ENCODE measurements at regions of chr6 and their contacts with region 1.

Region 1: GRCh38 chr6:39865011-39865888 is 69.0 kb downstream of the MOCS1 start:
- DNase-seq: peak in 7 of 9 donors; percentile 2 to 65 (median 29)
- ATAC-seq: peak; percentile 52
- H3K4me3 ChIP-seq: no peak overlapping the region
- H3K4me3 Mint-ChIP-seq: no peak overlapping the region
- H3K27ac ChIP-seq: no peak overlapping the region
- H3K27ac Mint-ChIP-seq: no peak overlapping the region
- H3K4me1 ChIP-seq: no peaks in the 10 kb centered on the region
- H3K4me1 Mint-ChIP-seq: no peaks in the 10 kb centered on the region
- H3K27me3 ChIP-seq: no peaks in the 10 kb centered on the region
- H3K27me3 Mint-ChIP-seq: peaks cover 0 to 38% (median 12%) of the 10 kb centered on the region in 5 donors

Region 2: DNA sequence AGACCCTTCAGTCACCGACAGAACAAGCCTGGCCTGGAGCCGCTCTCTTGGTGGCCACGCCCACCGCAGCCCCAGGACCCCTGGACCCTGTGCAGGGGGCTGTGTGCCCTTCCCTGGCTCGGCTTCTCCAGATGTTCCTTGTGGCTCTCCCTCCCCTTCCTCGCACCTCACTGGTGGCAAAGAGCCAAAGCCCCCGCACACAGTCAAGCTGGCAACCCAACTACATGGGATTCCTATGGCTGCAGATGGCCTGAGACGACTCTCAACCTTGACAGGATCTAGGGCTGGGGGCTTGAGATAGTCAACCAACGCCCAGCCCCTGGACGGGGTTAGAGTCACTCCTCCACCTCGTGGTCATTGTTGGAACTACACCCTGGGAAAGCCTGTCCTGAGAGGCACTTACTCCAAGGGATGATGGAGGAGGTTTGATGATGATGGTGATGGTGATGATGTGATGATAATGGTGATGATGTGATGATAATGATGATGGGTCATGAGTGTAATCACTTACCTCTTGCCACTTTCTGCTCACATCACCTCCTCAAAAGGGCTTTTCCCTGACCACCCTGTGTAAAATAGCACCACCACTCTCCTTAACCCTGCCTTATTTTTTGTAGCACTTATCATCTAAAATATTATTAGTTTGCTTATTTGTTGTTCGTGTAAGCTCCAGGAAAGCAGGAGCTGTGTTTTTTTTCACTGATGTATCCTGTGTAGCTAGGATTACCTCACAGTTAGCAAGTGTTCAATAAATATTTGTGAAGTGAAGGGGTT is 443.5 kb after region 1 on chr6:
- CTCF ChIA-PET with region 1: no interaction called
- POLR2A ChIA-PET with region 1: no interaction called
- intact Hi-C with region 1: loop called (anchors 5 kb)
- DNase-seq: peak in 6 of 9 donors; percentile 14 to 70 (median 40)
- ATAC-seq: peak; percentile 58
- H3K4me3 ChIP-seq: no peak overlapping the region
- H3K4me3 Mint-ChIP-seq: no peak overlapping the region
- H3K27ac ChIP-seq: no peak overlapping the region
- H3K27ac Mint-ChIP-seq: peak overlapping the region in 1 of 9 donors; percentile 58
- H3K4me1 ChIP-seq: no peaks in the 10 kb centered on the region
- H3K4me1 Mint-ChIP-seq: peaks cover 0 to 12% (median 0%) of the 10 kb centered on the region in 7 donors
- H3K27me3 ChIP-seq: no peaks in the 10 kb centered on the region
- H3K27me3 Mint-ChIP-seq: peaks cover 34 to 48% (median 44%) of the 10 kb centered on the region in 5 donors

Region 3: DNA sequence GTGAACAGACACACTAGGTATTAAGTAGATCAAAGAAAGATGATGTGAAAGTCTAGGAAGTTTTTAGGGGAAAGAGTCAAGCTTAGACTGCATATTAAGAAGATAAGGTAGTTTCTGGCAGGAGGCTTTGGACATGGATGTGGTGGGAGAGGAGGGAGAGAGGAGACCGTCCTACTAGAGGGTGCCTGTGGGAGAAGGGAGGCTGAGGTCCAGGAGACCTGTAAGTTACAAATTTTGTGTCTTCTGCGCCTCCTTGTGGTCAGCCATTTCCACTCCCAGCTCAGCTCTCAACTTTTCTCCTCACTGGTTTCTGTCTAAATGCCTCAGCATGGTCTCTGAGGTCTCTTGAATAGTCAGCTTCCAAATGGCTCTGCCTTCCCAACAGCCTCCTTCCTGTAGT is 980.3 kb after region 1 on chr6:
- CTCF ChIA-PET with region 1: no interaction called
- POLR2A ChIA-PET with region 1: no interaction called
- intact Hi-C with region 1: loop called in 1 of 2 experiments (anchors 10 kb)
- DNase-seq: peak in 4 of 9 donors; percentile 6 to 23 (median 16)
- ATAC-seq: no peak
- H3K4me3 ChIP-seq: no peak overlapping the region
- H3K4me3 Mint-ChIP-seq: no peak overlapping the region
- H3K27ac ChIP-seq: no peak overlapping the region
- H3K27ac Mint-ChIP-seq: no peak overlapping the region
- H3K4me1 ChIP-seq: no peaks in the 10 kb centered on the region
- H3K4me1 Mint-ChIP-seq: peaks cover 0 to 4% (median 0%) of the 10 kb centered on the region in 7 donors
- H3K27me3 ChIP-seq: no peaks in the 10 kb centered on the region
- H3K27me3 Mint-ChIP-seq: peaks cover 11 to 45% (median 28%) of the 10 kb centered on the region in 5 donors

Region 4: DNA sequence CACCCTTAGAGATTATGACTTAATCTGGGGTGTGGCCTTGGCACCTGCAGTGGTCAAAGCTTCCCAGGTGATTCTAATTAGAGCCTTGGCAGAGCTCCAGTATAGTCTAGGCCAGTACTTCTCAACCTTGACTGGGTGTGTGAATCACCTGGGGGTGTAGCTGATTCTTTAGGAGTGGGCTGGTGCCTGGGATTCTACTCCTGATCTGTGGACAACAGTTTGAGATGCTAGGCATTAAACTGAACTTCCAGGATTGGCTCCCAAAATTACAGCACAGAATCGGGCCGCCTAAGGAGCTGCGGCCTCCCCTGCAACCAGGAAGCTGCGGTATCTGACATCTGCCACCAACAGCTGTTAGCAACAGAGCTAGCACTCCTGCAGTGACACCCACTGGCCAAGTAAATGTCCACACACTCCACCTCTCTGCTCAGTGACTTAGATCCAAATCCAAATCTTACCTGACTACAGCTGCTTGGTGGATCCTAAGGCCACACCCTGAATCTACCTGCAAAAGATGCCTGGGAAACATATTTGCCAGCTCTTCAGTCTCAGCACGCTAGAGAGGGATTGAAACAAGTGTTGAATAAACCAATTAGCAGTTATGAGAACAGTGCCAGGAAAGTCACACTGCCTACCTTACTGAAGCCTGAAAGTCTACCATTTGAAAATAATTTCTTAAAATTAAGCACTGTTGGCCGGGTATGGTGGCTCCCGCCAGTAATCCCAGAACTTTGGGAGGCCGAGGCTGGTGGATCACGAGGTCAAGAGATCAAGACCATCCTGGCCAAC is 1047.1 kb after region 1 on chr6:
- CTCF ChIA-PET with region 1: no interaction called
- POLR2A ChIA-PET with region 1: no interaction called
- intact Hi-C with region 1: loop called in 1 of 2 experiments (anchors 10 kb)
- DNase-seq: peak in 5 of 9 donors; percentile 9 to 26 (median 12)
- ATAC-seq: peak; percentile 49
- H3K4me3 ChIP-seq: no peak overlapping the region
- H3K4me3 Mint-ChIP-seq: no peak overlapping the region
- H3K27ac ChIP-seq: no peak overlapping the region
- H3K27ac Mint-ChIP-seq: no peak overlapping the region
- H3K4me1 ChIP-seq: no peaks in the 10 kb centered on the region
- H3K4me1 Mint-ChIP-seq: peaks cover 0 to 5% (median 0%) of the 10 kb centered on the region in 7 donors
- H3K27me3 ChIP-seq: no peaks in the 10 kb centered on the region
- H3K27me3 Mint-ChIP-seq: peaks cover 8 to 42% (median 15%) of the 10 kb centered on the region in 5 donors

Measured in naive thymus-derived CD4-positive, alpha-beta T cell (primary cell).